ENCODE measurements at regions of chr7 and their contacts with region 1.

Region 1: GRCh38 chr7:831596-832166 is 595 bp upstream of the SUN1 start:
- DNase-seq: peak; percentile 64
- ATAC-seq: peak; percentile 87
- H3K4me3 ChIP-seq: peak overlapping the region; percentile 31
- H3K27ac ChIP-seq: peak overlapping the region; percentile 77
- H3K4me1 ChIP-seq: peaks cover 27% of the 10 kb centered on the region
- H3K27me3 ChIP-seq: no peaks in the 10 kb centered on the region
- CTCF ChIP-seq: no peak
- EP300 ChIP-seq: peak; percentile 57 to 82; a peak in 3 of 4 replicates
- POLR2A ChIP-seq: no peak
- RAD21 ChIP-seq: 0 out of 2 replicates have a peak, but pooled peaks have one; percentile 18

Region 2: DNA sequence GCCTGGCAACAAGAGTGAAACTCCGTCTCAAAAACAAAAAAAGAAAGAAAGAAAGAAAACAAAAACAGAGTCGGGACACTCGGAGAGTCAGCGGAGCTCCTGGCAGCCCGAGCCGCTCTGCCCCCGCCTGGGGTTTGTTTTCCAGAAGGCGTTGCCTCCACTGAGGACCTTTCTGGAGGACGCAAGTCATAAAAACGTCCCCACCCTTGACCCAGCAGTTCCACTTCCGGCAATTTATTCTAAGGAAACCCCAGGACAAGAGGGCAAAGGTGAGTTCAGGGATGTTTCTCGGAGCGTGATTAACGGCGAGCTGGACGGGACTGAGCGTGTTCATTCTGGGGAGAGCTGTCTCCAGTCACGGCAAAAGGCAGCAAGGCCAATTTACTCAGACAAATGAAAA is 26.4 kb before region 1 on chr7:
- CTCF ChIA-PET with region 1: no interaction called
- POLR2A ChIA-PET with region 1: interaction called, 10 read pairs
- RAD21 ChIA-PET with region 1: no interaction called
- SMC1A ChIA-PET with region 1: no interaction called
- in situ Hi-C with region 1: no loop called
- intact Hi-C with region 1: no loop called
- DNase-seq: no peak
- ATAC-seq: no peak
- H3K4me3 ChIP-seq: no peak overlapping the region
- H3K27ac ChIP-seq: no peak overlapping the region
- H3K4me1 ChIP-seq: no peaks in the 10 kb centered on the region
- H3K27me3 ChIP-seq: no peaks in the 10 kb centered on the region
- CTCF ChIP-seq: no peak
- EP300 ChIP-seq: no peak
- POLR2A ChIP-seq: no peak
- RAD21 ChIP-seq: no peak

Region 3: DNA sequence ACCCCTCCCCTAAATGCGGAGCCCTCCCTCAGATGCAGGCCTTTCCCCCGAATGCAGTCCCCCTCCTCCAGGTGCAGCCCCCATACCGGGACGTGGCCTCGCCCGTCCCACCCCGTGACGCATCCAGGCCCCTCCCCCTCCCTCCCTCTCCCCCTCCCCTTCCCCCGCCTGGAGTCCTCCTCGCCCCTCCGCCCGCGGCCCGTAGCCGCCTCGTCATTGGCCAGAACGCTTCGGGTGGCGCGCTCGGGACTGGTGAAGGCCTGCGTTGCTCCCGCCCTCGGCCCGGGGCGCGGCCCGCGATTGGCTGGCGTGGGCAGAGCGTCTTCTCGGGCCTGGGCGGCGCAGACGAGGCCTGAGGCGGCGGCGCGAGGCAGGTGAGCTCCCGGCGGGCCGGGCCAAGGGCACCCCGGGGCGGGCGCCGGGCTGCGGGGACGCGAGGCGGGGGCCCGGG is 15.4 kb before region 1 on chr7:
- CTCF ChIA-PET with region 1: interaction called, 8 read pairs
- POLR2A ChIA-PET with region 1: interaction called, 34 read pairs
- RAD21 ChIA-PET with region 1: interaction called, 14 read pairs
- SMC1A ChIA-PET with region 1: interaction called, 11 read pairs
- in situ Hi-C with region 1: no loop called
- intact Hi-C with region 1: no loop called
- DNase-seq: peak; percentile 84
- ATAC-seq: peak; percentile 94
- H3K4me3 ChIP-seq: peak overlapping the region; percentile 57; the same call in 1 of the 2 replicates
- H3K27ac ChIP-seq: no peak overlapping the region; the same call in 1 of the 2 replicates
- H3K4me1 ChIP-seq: peaks cover 24% of the 10 kb centered on the region
- H3K27me3 ChIP-seq: no peaks in the 10 kb centered on the region
- CTCF ChIP-seq: no peak
- EP300 ChIP-seq: no peak
- POLR2A ChIP-seq: peak; percentile 83
- RAD21 ChIP-seq: no peak

Measured in GM12878 (cell line).